ENCODE measurements at regions of chr5 and their contacts with region 1.

Region 1: DNA sequence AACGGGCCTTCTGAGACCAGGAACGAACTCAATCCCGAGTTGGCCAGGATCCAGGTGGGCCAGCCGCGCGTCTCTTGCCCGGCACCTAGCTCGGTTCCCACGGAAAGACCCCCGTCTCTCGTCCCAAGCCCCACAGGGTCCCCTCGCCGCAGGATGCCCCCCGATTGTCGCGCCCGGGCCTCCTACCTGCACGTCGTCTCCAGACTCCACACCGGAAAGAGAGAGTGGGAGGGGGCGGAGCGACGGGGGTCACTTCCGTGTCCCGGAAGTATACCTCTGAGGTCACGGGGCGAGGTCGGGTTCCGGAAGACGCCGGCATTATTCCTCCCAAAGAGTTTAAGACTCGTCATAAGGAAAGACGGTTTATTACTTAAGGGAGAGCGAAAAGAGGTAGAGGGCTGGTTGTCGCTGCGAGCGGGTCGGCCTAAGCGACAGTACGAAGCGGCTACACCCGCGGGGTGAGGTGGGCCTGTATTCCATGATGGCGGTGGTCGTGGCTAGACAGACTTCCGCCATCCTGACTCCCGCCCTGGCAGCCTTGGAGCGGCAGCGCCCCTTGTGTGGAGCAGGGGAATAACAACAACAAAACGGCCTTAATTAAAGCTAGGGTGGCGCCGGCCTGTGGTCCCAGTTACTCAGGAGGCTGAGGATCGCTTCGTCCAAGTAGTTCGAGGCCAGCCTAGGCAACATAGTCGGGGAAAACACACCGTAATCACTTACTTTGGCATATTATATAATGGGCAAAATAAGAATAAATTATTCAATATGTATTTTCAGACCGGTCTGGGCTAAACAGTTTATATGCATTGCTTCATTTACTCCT is at the start of gene RPS14:
- DNase-seq: peak; percentile 99
- ATAC-seq: peak; percentile 94
- H3K4me3 ChIP-seq: peak within 1 kb of the TSS; percentile 80 to 98 (median 97)
- H3K4me3 Mint-ChIP-seq: peak within 1 kb of the TSS; percentile 100
- H3K27ac ChIP-seq: peak within 1 kb of the TSS; percentile 90 to 98
- H3K27ac Mint-ChIP-seq: peak within 1 kb of the TSS; percentile 100
- H3K4me1 ChIP-seq: peaks cover 23 to 32% of the 10 kb centered on the region in 2 donors
- H3K4me1 Mint-ChIP-seq: peaks cover 30% of the 10 kb centered on the region
- H3K27me3 ChIP-seq: no peaks in the 10 kb centered on the region
- H3K27me3 Mint-ChIP-seq: no peaks in the 10 kb centered on the region
- CTCF ChIP-seq: peak; percentile 95
- total RNA-seq, gene RPS14: 3,565 and 3,740 TPM in 2 replicates

Region 2: DNA sequence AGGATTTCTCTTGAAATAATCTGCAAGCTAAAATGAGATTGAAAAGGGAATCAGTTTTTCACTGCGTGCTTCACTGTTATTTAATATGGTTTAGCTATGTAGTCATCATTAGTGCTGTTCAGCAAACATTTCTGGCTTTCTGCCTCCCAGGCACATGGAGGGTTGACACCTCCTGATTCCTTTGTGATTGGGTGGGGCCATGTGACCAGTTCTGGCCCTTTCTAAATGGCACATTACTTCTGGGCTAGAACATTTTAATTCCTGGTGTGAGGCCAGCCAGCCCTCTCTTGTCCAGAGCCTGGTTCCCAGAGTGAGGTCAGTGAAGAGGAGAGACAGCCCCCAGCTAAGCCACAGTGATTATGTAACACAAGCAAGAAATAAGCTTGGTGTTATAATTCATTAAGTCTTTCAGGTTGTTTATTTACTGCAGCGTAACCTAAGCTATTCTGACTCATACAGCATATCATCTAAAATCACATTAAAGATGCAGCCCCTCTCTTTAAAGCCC is 129.6 kb before region 1 on chr5:
- CTCF ChIA-PET with region 1: no interaction called
- POLR2A ChIA-PET with region 1: no interaction called
- intact Hi-C with region 1: no loop called
- DNase-seq: no peak
- ATAC-seq: no peak
- H3K4me3 ChIP-seq: no peak overlapping the region
- H3K4me3 Mint-ChIP-seq: no peak overlapping the region
- H3K27ac ChIP-seq: no peak overlapping the region
- H3K27ac Mint-ChIP-seq: no peak overlapping the region
- H3K4me1 ChIP-seq: no peaks in the 10 kb centered on the region
- H3K4me1 Mint-ChIP-seq: no peaks in the 10 kb centered on the region
- H3K27me3 ChIP-seq: no peaks in the 10 kb centered on the region
- H3K27me3 Mint-ChIP-seq: peaks cover 6% of the 10 kb centered on the region
- CTCF ChIP-seq: no peak

Region 3: DNA sequence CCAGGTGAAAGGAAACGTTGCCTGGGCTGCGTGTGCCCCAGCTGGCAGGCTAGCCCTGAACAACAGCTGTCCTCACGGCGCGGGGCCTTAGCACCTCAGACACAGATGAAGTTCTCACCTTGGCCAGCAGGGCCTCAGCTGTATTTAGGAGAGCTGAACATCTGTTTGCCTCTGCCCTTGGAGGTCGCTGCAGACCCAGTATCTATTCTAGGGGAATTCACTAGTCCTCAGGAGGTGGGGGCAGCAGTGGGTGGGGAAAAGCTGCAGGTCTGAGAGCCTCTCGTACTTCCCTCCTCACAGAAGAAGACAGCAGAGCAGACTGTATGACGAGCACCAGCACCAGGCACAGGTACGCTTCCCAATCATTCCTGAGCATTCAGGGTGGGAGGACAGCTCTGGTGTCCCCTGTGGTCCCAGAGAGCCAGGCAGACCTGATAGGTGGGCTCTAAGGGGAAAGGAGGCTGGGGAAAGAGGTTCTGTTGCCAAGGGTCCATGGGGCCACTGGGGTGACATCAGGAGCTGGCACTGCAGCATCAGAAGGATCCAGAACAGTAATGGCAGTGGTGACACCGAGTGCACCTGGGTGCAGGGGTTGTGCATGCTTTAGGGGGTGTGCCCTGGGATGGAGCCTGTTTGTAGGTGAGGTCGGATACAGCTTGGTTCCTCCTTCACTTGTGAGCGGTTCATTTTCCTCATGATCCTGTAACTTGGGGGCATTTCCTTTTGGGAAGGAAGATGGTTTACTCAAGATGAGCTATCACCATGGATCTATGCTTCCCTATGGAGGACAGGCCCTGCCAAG is 50.8 kb before region 1 on chr5:
- CTCF ChIA-PET with region 1: interaction called, 38 read pairs
- POLR2A ChIA-PET with region 1: interaction called, 37 read pairs
- intact Hi-C with region 1: no loop called
- DNase-seq: peak; percentile 94
- ATAC-seq: peak; percentile 67
- H3K4me3 ChIP-seq: no peak overlapping the region
- H3K4me3 Mint-ChIP-seq: peak overlapping the region; percentile 27
- H3K27ac ChIP-seq: peak overlapping the region; percentile 54 to 63
- H3K27ac Mint-ChIP-seq: peak overlapping the region; percentile 88
- H3K4me1 ChIP-seq: peaks cover 3 to 33% of the 10 kb centered on the region in 2 donors
- H3K4me1 Mint-ChIP-seq: peaks cover 49% of the 10 kb centered on the region
- H3K27me3 ChIP-seq: no peaks in the 10 kb centered on the region
- H3K27me3 Mint-ChIP-seq: no peaks in the 10 kb centered on the region
- CTCF ChIP-seq: peak; percentile 83

Region 4: GRCh38 chr5:150419630-150420270 is 30.0 kb before region 1 on chr5:
- CTCF ChIA-PET with region 1: interaction called, 15 read pairs
- POLR2A ChIA-PET with region 1: interaction called, 4 read pairs
- intact Hi-C with region 1: no loop called
- DNase-seq: peak; percentile 87
- ATAC-seq: peak; percentile 99
- H3K4me3 ChIP-seq: peak overlapping the region in 4 of 5 experiments; percentile 16 to 46 (median 33)
- H3K4me3 Mint-ChIP-seq: peak overlapping the region; percentile 81
- H3K27ac ChIP-seq: peak overlapping the region; percentile 86 to 88
- H3K27ac Mint-ChIP-seq: peak overlapping the region; percentile 100
- H3K4me1 ChIP-seq: peaks cover 67 to 72% of the 10 kb centered on the region in 2 donors
- H3K4me1 Mint-ChIP-seq: peaks cover 59% of the 10 kb centered on the region
- H3K27me3 ChIP-seq: no peaks in the 10 kb centered on the region
- H3K27me3 Mint-ChIP-seq: no peaks in the 10 kb centered on the region
- CTCF ChIP-seq: no peak

Region 5: DNA sequence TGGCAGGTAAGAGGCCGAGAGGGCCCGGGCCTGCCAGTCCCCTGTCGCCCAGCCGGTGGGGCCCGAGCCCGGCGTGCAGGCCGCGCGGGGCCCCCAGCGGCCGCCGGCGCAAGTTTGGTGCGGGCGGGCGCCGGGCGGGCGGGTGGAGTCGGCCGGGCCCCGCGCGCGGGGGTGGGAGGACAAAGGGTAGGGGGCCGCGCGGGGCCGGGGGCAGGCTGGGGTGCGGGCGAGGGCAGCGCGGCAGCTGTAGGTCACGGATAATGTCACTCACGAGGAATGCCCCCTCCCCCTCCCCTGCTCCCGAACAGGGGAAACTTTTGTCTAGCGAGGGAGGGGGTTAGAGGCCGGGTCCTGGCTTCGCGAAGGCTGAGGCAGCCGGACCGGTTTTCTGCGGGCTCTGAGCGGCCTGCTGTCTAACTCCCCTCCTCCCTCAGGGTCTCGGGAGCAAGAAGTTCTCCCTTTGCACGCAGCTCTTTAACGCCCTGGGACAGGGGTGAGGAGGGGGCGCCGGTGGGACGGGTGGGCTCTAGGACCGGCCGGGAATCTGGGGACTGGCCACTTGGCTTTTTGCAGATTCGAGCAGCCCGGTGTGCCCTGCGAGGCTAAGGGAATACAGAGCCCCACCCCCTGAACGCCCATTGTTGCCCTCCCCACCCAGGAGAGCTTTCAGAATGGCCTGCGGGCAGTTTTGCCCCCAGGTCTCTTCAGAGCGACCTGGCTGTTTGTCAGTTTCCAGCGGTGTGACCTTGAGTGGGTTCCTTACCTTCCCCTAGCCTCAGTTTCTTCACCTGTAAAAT is 36.9 kb after region 1 on chr5:
- CTCF ChIA-PET with region 1: interaction called, 4 read pairs
- POLR2A ChIA-PET with region 1: interaction called, 11 read pairs
- intact Hi-C with region 1: loop called (anchors 5 kb)
- DNase-seq: peak; percentile 86
- ATAC-seq: peak; percentile 46
- H3K4me3 ChIP-seq: peak overlapping the region; percentile 59 to 91 (median 71)
- H3K4me3 Mint-ChIP-seq: peak overlapping the region; percentile 82
- H3K27ac ChIP-seq: peak overlapping the region; percentile 72 to 73
- H3K27ac Mint-ChIP-seq: peak overlapping the region; percentile 85
- H3K4me1 ChIP-seq: peaks cover 39 to 58% of the 10 kb centered on the region in 2 donors
- H3K4me1 Mint-ChIP-seq: peaks cover 51% of the 10 kb centered on the region
- H3K27me3 ChIP-seq: no peaks in the 10 kb centered on the region
- H3K27me3 Mint-ChIP-seq: no peaks in the 10 kb centered on the region
- CTCF ChIP-seq: no peak

Region 6: DNA sequence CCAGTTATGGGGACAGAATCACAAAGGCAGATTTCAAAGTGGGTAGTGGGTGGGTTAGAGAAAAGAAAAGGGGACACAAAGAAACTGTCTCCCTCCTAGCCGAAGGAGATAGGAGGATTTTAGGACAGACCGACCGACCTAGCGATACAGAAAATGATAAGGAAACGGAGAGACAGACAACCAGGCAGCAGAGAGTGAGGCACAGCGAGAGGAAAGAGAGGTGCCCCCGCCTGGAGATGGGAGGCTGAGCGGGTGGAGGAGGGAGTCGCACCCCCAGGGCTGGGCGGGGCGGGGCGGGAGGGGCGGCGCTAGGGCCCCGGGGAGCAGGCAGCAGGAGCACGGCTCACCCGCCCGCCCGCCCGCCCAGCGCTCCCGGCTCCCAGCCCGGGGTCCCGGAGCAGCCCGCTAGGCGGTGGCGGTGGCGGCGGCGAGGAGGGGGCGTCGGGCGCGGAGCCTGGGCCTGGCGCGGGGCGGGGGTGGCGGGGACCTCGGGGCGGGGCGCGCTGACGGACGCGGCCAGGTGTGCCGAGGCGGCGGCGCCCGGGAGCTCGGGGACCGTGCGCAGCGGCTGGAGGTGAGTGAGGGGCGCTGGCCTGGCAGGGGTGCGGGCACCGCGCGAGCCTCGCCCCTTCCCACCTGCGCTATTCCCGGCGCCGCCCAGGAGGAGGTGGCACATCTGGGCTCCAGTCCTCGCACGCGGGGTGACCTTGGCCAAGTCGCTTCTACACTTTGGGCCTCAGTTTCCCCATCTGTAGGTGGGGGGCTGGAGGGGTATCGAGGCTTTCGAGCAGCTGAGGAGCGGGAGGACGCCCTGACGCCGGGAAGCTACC is 174.8 kb after region 1 on chr5:
- CTCF ChIA-PET with region 1: no interaction called
- POLR2A ChIA-PET with region 1: no interaction called
- intact Hi-C with region 1: loop called (anchors 10 kb)
- DNase-seq: peak; percentile 54
- ATAC-seq: peak; percentile 34
- H3K4me3 ChIP-seq: peak overlapping the region; percentile 46 to 83 (median 75)
- H3K4me3 Mint-ChIP-seq: peak overlapping the region; percentile 93
- H3K27ac ChIP-seq: peak overlapping the region in 1 of 2 donors; percentile 41
- H3K27ac Mint-ChIP-seq: peak overlapping the region; percentile 78
- H3K4me1 ChIP-seq: peaks cover 45 to 48% of the 10 kb centered on the region in 2 donors
- H3K4me1 Mint-ChIP-seq: peaks cover 55% of the 10 kb centered on the region
- H3K27me3 ChIP-seq: no peaks in the 10 kb centered on the region
- H3K27me3 Mint-ChIP-seq: no peaks in the 10 kb centered on the region
- CTCF ChIP-seq: no peak

Region 7: GRCh38 chr5:150700594-150701293 is 251.0 kb after region 1 on chr5 and contains the start of gene RBM22:
- CTCF ChIA-PET with region 1: interaction called, 11 read pairs
- POLR2A ChIA-PET with region 1: interaction called, 12 read pairs
- intact Hi-C with region 1: no loop called
- DNase-seq: peak; percentile 94
- ATAC-seq: peak; percentile 96
- H3K4me3 ChIP-seq: peak within 1 kb of the TSS; percentile 65 to 100 (median 99)
- H3K4me3 Mint-ChIP-seq: no peak within 1 kb of the TSS
- H3K27ac ChIP-seq: peak within 1 kb of the TSS; percentile 96 to 97
- H3K27ac Mint-ChIP-seq: no peak within 1 kb of the TSS
- H3K4me1 ChIP-seq: peaks cover 15 to 17% of the 10 kb centered on the region in 2 donors
- H3K4me1 Mint-ChIP-seq: peaks cover 8% of the 10 kb centered on the region
- H3K27me3 ChIP-seq: no peaks in the 10 kb centered on the region
- H3K27me3 Mint-ChIP-seq: no peaks in the 10 kb centered on the region
- CTCF ChIP-seq: peak; percentile 84
- total RNA-seq, gene RBM22: 88.4 and 89.4 TPM in 2 replicates

Measured in B cell (primary cell).